Caco-2 (cell line): ENCODE measurements at regions of chr15 and their contacts with region 1.

Region 1: DNA sequence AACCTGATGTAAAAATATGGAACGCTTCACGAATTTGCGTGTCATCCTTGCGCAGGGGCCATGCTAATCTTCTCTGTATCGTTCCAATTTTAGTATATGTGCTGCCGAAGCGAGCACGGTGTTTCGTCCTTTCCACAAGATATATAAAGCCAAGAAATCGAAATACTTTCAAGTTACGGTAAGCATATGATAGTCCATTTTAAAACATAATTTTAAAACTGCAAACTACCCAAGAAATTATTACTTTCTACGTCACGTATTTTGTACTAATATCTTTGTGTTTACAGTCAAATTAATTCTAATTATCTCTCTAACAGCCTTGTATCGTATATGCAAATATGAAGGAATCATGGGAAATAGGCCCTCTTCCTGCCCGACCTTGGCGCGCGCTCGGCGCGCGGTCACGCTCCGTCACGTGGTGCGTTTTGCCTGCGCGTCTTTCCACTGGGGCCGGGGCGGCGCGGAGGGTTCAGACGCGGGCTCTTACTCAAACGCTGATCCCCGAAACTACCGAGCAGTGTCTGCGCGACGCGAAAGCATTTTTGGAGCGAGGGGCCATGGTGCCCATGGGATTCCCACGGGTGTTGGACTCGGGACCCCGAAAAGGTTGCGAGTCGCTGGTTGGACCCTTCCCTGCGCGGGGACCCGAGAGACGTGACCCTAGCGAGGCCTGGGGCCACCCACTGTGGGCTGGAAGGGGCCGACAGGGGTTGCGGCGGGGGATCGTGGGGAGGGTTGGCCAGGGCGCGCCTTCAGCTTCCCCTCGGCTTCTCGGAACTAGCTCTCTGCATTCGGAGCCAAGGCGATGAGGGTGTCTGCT is at the start of gene RNU6-1:
- DNase-seq: peak; percentile 92 to 94
- H3K4me3 ChIP-seq: peak within 1 kb of the TSS; percentile 85
- H3K4me3 Mint-ChIP-seq: peak within 1 kb of the TSS; percentile 70
- H3K27ac Mint-ChIP-seq: peak within 1 kb of the TSS; percentile 95
- H3K4me1 ChIP-seq: peaks cover 32% of the 10 kb centered on the region
- H3K4me1 Mint-ChIP-seq: peaks cover 27% of the 10 kb centered on the region
- H3K27me3 ChIP-seq: no peaks in the 10 kb centered on the region
- H3K27me3 Mint-ChIP-seq: no peaks in the 10 kb centered on the region
- CTCF ChIP-seq: no peak
- total RNA-seq, gene RNU6-1: not detected in 2 replicates

Region 2: DNA sequence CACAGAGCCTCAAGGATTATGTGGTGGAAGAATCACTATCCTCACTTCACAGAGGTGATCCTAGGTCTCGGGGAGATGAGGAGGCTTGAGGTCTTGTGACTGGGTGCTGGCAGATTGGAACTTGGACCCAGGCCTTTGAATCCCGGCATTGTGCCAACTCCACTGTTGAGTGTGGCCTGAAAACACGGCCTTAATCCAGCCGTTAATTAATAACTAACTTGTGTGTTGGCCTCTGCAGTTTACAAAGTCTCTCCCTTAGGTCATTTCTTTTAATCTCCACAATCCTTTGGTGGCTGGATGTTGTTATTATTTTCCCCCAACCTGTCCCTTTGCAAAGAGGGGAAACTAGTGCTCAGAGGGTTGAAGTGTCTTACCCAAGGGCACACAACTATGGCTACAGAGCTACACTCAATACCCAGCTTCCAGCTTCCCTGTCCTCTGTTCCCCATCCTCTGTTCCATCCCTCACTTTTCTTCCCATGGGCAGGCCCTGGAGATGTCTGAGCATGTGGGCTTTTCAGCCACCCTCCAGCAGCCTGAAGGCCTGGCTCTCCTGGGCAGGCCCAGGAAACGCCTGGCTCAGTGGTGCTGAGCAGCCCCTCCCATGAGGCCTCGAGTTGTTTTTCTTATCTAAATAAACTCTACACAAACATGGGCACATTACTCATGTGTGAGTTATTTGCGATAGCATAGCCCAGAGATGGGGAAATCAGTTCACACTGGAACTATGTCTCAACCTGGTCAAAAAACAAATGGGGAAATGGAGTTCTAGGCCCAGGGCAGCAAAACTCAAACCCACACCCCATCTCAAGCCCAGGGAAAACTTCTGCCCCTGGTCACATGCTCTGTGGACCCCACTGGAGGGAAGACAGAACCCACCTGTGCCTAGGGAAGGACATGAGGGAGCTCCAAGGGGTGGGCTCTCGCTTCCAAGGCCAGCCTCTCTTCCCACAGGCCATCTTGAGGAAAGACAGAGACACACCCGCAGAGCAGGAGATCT is 791.6 kb before region 1 on chr15:
- CTCF ChIA-PET with region 1: no interaction called
- POLR2A ChIA-PET with region 1: no interaction called
- intact Hi-C with region 1: loop called (anchors 10 kb)
- DNase-seq: peak; percentile 86 to 91
- H3K4me3 ChIP-seq: no peak overlapping the region
- H3K4me3 Mint-ChIP-seq: peak overlapping the region; percentile 44
- H3K27ac Mint-ChIP-seq: peak overlapping the region; percentile 92
- H3K4me1 ChIP-seq: peaks cover 59% of the 10 kb centered on the region
- H3K4me1 Mint-ChIP-seq: peaks cover 54% of the 10 kb centered on the region
- H3K27me3 ChIP-seq: no peaks in the 10 kb centered on the region
- H3K27me3 Mint-ChIP-seq: no peaks in the 10 kb centered on the region
- CTCF ChIP-seq: no peak

Region 3: DNA sequence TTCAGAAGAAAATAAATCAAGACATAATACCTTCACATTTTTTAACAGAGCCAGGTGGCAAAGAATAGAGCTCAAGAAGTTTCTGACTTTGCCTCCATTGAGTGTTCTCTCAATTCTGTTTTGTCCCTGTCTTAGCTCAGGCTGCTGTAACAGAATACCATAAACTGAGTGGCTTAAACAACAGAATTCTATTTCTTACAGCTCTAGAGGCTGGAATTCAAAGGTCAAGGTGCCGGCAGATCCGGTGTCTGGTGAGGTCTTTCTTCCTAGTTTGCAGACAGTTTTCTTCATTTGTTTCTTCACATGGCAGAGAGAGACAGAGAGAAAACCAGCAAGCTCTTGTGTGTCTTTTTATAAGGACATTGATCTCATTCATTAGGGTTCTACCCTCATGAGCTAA is 559.9 kb before region 1 on chr15:
- CTCF ChIA-PET with region 1: no interaction called
- POLR2A ChIA-PET with region 1: no interaction called
- intact Hi-C with region 1: no loop called
- DNase-seq: no peak
- H3K4me3 ChIP-seq: no peak overlapping the region
- H3K4me3 Mint-ChIP-seq: no peak overlapping the region
- H3K27ac Mint-ChIP-seq: no peak overlapping the region
- H3K4me1 ChIP-seq: no peaks in the 10 kb centered on the region
- H3K4me1 Mint-ChIP-seq: no peaks in the 10 kb centered on the region
- H3K27me3 ChIP-seq: no peaks in the 10 kb centered on the region
- H3K27me3 Mint-ChIP-seq: no peaks in the 10 kb centered on the region
- CTCF ChIP-seq: no peak

Region 4: DNA sequence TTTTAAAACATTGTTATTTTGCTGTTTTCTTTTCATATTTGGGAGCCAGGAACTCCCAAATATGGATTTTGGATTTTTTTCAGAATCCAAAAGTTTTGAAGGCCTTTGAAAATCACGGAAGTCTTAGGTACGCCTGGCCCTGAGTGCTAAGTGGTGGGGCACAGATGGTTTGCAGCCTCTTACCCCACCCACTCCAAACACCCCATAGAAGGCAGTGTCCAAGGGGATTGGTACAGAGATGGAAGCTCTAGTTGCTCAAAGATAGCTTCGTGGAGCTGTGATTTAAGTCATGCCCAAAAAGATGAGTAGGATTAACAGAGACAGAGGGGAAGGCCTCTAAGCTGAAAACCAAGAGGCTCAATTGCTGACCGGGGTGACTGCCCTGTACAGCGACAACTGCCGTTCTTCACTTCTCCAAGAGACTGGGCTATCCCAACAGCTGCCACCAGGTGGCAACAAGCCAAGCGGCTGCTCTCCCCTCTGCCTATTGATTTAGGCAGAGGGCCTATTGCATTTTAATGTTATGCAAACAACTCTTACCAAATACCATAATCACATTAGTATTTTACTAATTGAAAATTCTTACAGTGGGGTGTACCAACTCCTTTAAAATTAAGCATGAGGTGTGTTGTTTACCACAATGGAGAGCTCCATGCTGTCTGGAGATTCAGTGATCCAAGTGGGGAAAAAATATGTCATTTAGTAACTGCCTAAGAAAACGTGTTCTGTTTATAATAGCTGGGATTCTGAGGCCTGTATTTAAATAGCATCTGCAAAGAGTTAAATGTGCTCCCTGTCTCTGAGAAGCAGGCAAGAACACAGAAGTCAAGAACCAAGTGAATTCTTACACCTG is 383.2 kb before region 1 on chr15:
- CTCF ChIA-PET with region 1: interaction called, 4 read pairs
- POLR2A ChIA-PET with region 1: no interaction called
- intact Hi-C with region 1: loop called (anchors 1 kb)
- DNase-seq: peak; percentile 67 to 84
- H3K4me3 ChIP-seq: no peak overlapping the region
- H3K4me3 Mint-ChIP-seq: no peak overlapping the region
- H3K27ac Mint-ChIP-seq: no peak overlapping the region
- H3K4me1 ChIP-seq: no peaks in the 10 kb centered on the region
- H3K4me1 Mint-ChIP-seq: no peaks in the 10 kb centered on the region
- H3K27me3 ChIP-seq: no peaks in the 10 kb centered on the region
- H3K27me3 Mint-ChIP-seq: no peaks in the 10 kb centered on the region
- CTCF ChIP-seq: peak; percentile 80 to 89

Region 5: GRCh38 chr15:67863442-67863987 is 23.4 kb after region 1 on chr15:
- CTCF ChIA-PET with region 1: no interaction called
- POLR2A ChIA-PET with region 1: interaction called, 3 read pairs
- intact Hi-C with region 1: loop called (anchors 2 kb)
- DNase-seq: peak; percentile 82 to 86
- H3K4me3 ChIP-seq: peak overlapping the region; percentile 45
- H3K4me3 Mint-ChIP-seq: peak overlapping the region; percentile 70
- H3K27ac Mint-ChIP-seq: peak overlapping the region; percentile 80
- H3K4me1 ChIP-seq: peaks cover 9% of the 10 kb centered on the region; the same call in 1 of the 2 replicates
- H3K4me1 Mint-ChIP-seq: peaks cover 15% of the 10 kb centered on the region
- H3K27me3 ChIP-seq: no peaks in the 10 kb centered on the region
- H3K27me3 Mint-ChIP-seq: no peaks in the 10 kb centered on the region
- CTCF ChIP-seq: peak; percentile 89 to 91

Region 6: GRCh38 chr15:67897646-67898339 is 57.7 kb after region 1 on chr15:
- CTCF ChIA-PET with region 1: no interaction called
- POLR2A ChIA-PET with region 1: no interaction called
- intact Hi-C with region 1: no loop called
- DNase-seq: no peak
- H3K4me3 ChIP-seq: no peak overlapping the region
- H3K4me3 Mint-ChIP-seq: no peak overlapping the region
- H3K27ac Mint-ChIP-seq: no peak overlapping the region
- H3K4me1 ChIP-seq: 0 out of 2 replicates have a peak, but pooled peaks cover 3% of the 10 kb centered on the region
- H3K4me1 Mint-ChIP-seq: no peaks in the 10 kb centered on the region
- H3K27me3 ChIP-seq: no peaks in the 10 kb centered on the region
- H3K27me3 Mint-ChIP-seq: no peaks in the 10 kb centered on the region
- CTCF ChIP-seq: no peak

Region 7: GRCh38 chr15:68053701-68054627 is 213.8 kb after region 1 on chr15 and contains the start of gene PIAS1:
- CTCF ChIA-PET with region 1: no interaction called
- POLR2A ChIA-PET with region 1: interaction called, 9 read pairs
- intact Hi-C with region 1: loop called (anchors 2 kb)
- DNase-seq: peak; percentile 97
- H3K4me3 ChIP-seq: peak within 1 kb of the TSS; percentile 89
- H3K4me3 Mint-ChIP-seq: peak within 1 kb of the TSS; percentile 84
- H3K27ac Mint-ChIP-seq: peak within 1 kb of the TSS; percentile 60
- H3K4me1 ChIP-seq: peaks cover 39% of the 10 kb centered on the region
- H3K4me1 Mint-ChIP-seq: peaks cover 31% of the 10 kb centered on the region
- H3K27me3 ChIP-seq: no peaks in the 10 kb centered on the region
- H3K27me3 Mint-ChIP-seq: no peaks in the 10 kb centered on the region
- CTCF ChIP-seq: peak in 1 of 2 experiments; percentile 12
- total RNA-seq, gene PIAS1: 43.1 and 48.0 TPM in 2 replicates